Naive thymus-derived CD4-positive, alpha-beta T cell (primary cell): ENCODE measurements at regions of chr9 and their contacts with region 1.

Region 1: GRCh38 chr9:133459476-133460404 is at the start of gene CACFD1:
- DNase-seq: peak; percentile 81 to 91 (median 85)
- ATAC-seq: peak; percentile 87
- H3K4me3 ChIP-seq: peak within 1 kb of the TSS; percentile 88
- H3K4me3 Mint-ChIP-seq: peak within 1 kb of the TSS; percentile 88 to 94 (median 90)
- H3K27ac ChIP-seq: peak within 1 kb of the TSS; percentile 79
- H3K27ac Mint-ChIP-seq: peak within 1 kb of the TSS; percentile 54 to 94 (median 92)
- H3K4me1 ChIP-seq: peaks cover 6% of the 10 kb centered on the region in 2 donors
- H3K4me1 Mint-ChIP-seq: peaks cover 0 to 7% (median 4%) of the 10 kb centered on the region in 7 donors
- H3K27me3 ChIP-seq: no peaks in the 10 kb centered on the region
- H3K27me3 Mint-ChIP-seq: peaks cover 0 to 10% (median 0%) of the 10 kb centered on the region in 5 donors
- total RNA-seq, gene CACFD1: 0.56 to 4.7 (median 3.1) TPM

Region 2: DNA sequence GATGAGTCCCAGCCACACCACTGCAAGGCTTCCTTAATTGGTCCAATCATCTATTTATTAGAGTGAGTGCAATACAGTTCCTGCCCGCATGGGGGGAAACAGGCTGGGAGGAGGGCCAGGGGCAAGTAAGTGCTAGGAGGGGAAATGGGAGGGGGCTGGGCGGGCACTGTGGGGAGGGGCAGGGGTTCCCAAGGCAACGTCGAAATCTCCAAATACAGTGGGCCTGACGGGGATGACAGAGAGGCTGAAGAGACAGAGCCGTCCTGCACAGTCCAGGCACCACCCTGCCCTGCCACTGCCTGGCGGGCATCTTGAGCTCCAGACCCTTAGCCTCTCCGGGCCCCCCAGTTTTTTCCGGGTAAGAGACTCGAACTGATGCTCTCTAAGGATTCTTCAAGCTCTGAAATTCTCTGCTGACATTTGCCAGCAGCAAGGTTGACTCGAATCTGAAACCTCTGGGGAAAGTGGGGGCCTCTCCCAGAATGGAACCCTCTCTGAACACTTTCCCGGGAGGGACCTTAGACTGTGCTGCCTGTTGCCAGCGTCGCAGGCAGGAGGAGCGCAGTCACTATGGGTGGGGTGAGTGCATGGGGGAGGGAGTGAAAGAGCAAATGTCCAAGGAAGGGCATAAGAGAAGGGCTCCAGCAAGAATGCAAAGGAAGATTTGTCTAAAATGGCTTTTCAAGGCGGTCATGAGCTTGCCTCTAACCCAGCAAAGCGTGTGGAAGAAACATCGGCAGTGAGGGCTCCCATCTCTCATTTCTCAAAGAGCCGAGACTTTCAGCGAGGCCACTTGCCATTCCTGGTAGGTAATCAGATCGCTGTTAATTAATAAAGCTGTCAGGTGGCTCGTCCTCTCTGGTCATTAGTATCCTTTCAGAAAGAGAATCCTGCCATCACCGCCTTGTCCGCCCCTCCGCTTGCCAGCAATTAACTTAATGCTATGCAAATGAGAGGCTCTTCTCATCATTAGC is 690.5 kb before region 1 on chr9:
- CTCF ChIA-PET with region 1: no interaction called
- POLR2A ChIA-PET with region 1: no interaction called
- intact Hi-C with region 1: loop called in 1 of 2 experiments (anchors 5 kb)
- DNase-seq: peak in 8 of 9 donors; percentile 42 to 69 (median 60)
- ATAC-seq: peak; percentile 86
- H3K4me3 ChIP-seq: peak overlapping the region; percentile 86
- H3K4me3 Mint-ChIP-seq: peak overlapping the region; percentile 95 to 100 (median 98)
- H3K27ac ChIP-seq: peak overlapping the region; percentile 77
- H3K27ac Mint-ChIP-seq: peak overlapping the region; percentile 90 to 99 (median 97)
- H3K4me1 ChIP-seq: peaks cover 3 to 9% of the 10 kb centered on the region in 2 donors
- H3K4me1 Mint-ChIP-seq: peaks cover 8 to 37% (median 27%) of the 10 kb centered on the region in 7 donors
- H3K27me3 ChIP-seq: no peaks in the 10 kb centered on the region
- H3K27me3 Mint-ChIP-seq: peaks cover 0 to 20% (median 0%) of the 10 kb centered on the region in 5 donors

Region 3: GRCh38 chr9:133347985-133348717 is 111.6 kb before region 1 on chr9 and contains the starts of genes MED22 and RPL7A:
- CTCF ChIA-PET with region 1: no interaction called
- POLR2A ChIA-PET with region 1: interaction called, 3 read pairs
- intact Hi-C with region 1: loop called in 1 of 2 experiments (anchors 5 kb)
- DNase-seq: peak; percentile 72 to 95 (median 92)
- ATAC-seq: peak; percentile 95
- H3K4me3 ChIP-seq: peak within 1 kb of the TSS; percentile 93
- H3K4me3 Mint-ChIP-seq: peak within 1 kb of the TSS; percentile 94 to 100 (median 98)
- H3K27ac ChIP-seq: peak within 1 kb of the TSS; percentile 98
- H3K27ac Mint-ChIP-seq: peak within 1 kb of the TSS; percentile 87 to 99 (median 97)
- H3K4me1 ChIP-seq: peaks cover 19 to 20% of the 10 kb centered on the region in 2 donors
- H3K4me1 Mint-ChIP-seq: peaks cover 23 to 46% (median 39%) of the 10 kb centered on the region in 7 donors
- H3K27me3 ChIP-seq: no peaks in the 10 kb centered on the region
- H3K27me3 Mint-ChIP-seq: peaks cover 0 to 2% (median 0%) of the 10 kb centered on the region in 5 donors
- total RNA-seq, gene MED22: 26.5 to 44.6 (median 32.8) TPM
- total RNA-seq, gene RPL7A: 2,002 to 2,815 (median 2,428) TPM

Region 4: DNA sequence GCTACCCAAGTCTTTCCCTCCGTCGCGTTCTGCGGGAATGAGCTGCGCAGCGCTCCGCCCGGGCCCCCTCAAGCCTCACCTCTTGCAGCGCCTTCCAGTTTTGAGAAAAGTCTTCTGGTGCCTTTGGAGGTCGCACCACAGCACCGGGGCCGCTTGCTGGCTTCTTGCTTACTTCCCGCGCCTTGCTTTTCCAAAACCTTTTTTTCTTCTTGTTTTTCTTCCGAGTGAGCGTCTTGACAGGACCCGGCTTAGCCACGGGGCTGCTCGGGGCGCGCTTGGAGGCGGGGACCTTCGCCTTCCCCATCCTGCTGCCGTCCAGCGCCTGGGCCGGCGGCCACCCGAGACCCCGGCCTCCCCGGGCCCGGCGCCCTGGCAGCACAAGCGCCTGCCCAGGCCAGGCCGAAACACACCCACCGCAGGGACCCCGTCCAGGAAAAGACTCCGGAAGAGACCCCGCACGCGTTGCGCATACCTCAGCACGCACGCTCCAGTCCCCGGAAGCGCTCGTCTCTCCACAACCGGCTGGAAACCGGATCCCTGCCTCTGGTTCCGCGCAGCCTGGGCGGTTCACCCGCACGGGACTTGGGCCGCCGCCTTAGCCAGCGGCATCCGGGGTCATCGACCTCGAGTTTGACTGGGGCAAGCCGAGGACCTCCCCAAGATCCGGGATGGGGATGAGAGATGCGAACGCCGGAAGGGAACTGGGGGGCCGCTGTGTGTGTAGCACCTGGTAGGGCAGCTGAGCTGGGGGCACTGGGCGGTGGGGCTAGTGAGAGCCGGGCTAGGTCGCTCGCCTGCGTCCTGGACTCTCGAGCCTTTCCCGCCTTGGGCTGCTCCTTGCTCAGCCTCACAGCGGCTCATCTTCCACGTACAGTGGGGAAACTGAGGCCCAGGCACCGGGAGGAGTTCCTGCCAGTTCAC is 41.9 kb before region 1 on chr9 and contains the start of gene REXO4:
- CTCF ChIA-PET with region 1: no interaction called
- POLR2A ChIA-PET with region 1: interaction called, 3 read pairs
- intact Hi-C with region 1: loop called (anchors 1 kb)
- DNase-seq: peak; percentile 73 to 88 (median 84)
- ATAC-seq: peak; percentile 93
- H3K4me3 ChIP-seq: peak within 1 kb of the TSS; percentile 87
- H3K4me3 Mint-ChIP-seq: peak within 1 kb of the TSS; percentile 88 to 93 (median 91)
- H3K27ac ChIP-seq: peak within 1 kb of the TSS; percentile 80
- H3K27ac Mint-ChIP-seq: peak within 1 kb of the TSS; percentile 81 to 94 (median 91)
- H3K4me1 ChIP-seq: peaks cover 13 to 14% of the 10 kb centered on the region in 2 donors
- H3K4me1 Mint-ChIP-seq: peaks cover 32 to 60% (median 54%) of the 10 kb centered on the region in 7 donors
- H3K27me3 ChIP-seq: no peaks in the 10 kb centered on the region
- H3K27me3 Mint-ChIP-seq: peaks cover 0 to 3% (median 0%) of the 10 kb centered on the region in 5 donors
- total RNA-seq, gene REXO4: 17.8 to 44.1 (median 28.6) TPM

Region 5: DNA sequence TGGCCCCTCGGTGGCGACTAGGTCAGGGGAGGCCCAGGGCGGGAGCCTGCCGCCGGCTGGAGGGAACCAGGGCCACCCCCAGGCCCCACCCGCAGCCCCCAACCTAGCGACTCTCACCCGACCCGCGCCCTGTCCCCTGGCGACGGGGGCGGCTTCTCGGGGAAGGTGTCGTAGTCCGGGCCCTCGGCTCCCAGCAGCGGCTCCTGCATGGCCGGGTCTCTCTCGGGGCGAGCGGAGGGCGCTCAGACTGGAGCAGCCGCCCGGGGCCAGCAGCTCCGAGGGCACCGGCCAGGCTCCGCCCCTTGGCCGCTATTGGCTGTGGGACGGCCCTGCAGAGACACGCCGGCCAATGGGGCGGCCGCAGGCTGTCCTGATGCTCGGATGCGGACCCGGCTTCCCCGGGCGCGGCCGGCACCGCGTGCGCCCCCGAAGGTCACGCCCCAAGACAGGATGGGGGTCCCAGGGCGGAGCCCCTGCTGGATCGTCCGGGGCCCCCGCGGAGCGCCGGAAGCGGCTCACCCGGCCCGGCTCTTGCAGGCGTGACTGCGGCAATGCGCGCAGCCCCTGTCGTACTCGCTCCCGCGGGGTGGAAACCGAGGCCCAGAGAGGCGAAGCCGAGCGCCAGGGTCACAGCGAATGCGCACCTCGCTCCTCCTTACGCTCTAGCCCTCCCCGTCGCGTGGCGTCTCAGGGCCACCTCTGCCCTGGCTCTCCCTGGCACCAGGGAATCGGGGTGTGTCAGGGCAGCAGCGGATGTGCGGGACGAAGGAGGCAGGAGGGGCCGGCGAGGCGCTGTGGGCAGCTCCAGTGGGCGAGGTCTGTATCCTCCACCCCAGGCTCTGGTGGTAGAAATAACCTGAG is 19.3 kb after region 1 on chr9 and contains the start of gene SLC2A6:
- CTCF ChIA-PET with region 1: interaction called, 4 read pairs
- POLR2A ChIA-PET with region 1: interaction called, 3 read pairs
- intact Hi-C with region 1: loop called (anchors 1 kb)
- DNase-seq: peak; percentile 64 to 87 (median 74)
- ATAC-seq: peak; percentile 96
- H3K4me3 ChIP-seq: peak within 1 kb of the TSS; percentile 77
- H3K4me3 Mint-ChIP-seq: peak within 1 kb of the TSS; percentile 50 to 83 (median 78)
- H3K27ac ChIP-seq: peak within 1 kb of the TSS; percentile 50
- H3K27ac Mint-ChIP-seq: peak within 1 kb of the TSS in 5 of 9 donors; percentile 48 to 83 (median 60)
- H3K4me1 ChIP-seq: peaks cover 0 to 12% of the 10 kb centered on the region in 2 donors
- H3K4me1 Mint-ChIP-seq: peaks cover 0 to 15% (median 10%) of the 10 kb centered on the region in 7 donors
- H3K27me3 ChIP-seq: no peaks in the 10 kb centered on the region
- H3K27me3 Mint-ChIP-seq: peaks cover 0 to 12% (median 0%) of the 10 kb centered on the region in 5 donors
- total RNA-seq, gene SLC2A6: 2.4 to 34.7 (median 3.6) TPM

Region 6: GRCh38 chr9:134024828-134025605 is 565.3 kb after region 1 on chr9 and contains the start of gene BRD3OS:
- CTCF ChIA-PET with region 1: no interaction called
- POLR2A ChIA-PET with region 1: no interaction called
- intact Hi-C with region 1: loop called in 1 of 2 experiments (anchors 1 kb)
- DNase-seq: peak; percentile 80 to 95 (median 91)
- ATAC-seq: peak; percentile 98
- H3K4me3 ChIP-seq: peak within 1 kb of the TSS; percentile 89
- H3K4me3 Mint-ChIP-seq: peak within 1 kb of the TSS; percentile 61 to 85 (median 80)
- H3K27ac ChIP-seq: peak within 1 kb of the TSS; percentile 75
- H3K27ac Mint-ChIP-seq: peak within 1 kb of the TSS; percentile 48 to 86 (median 78)
- H3K4me1 ChIP-seq: peaks cover 5 to 7% of the 10 kb centered on the region in 2 donors
- H3K4me1 Mint-ChIP-seq: peaks cover 0 to 21% (median 12%) of the 10 kb centered on the region in 7 donors
- H3K27me3 ChIP-seq: no peaks in the 10 kb centered on the region
- H3K27me3 Mint-ChIP-seq: no peaks in the 10 kb centered on the region
- total RNA-seq, gene BRD3OS: 8.3 to 19.3 (median 12.7) TPM